ENCODE measurements at regions of chr14 and their contacts with region 1.

Region 1: DNA sequence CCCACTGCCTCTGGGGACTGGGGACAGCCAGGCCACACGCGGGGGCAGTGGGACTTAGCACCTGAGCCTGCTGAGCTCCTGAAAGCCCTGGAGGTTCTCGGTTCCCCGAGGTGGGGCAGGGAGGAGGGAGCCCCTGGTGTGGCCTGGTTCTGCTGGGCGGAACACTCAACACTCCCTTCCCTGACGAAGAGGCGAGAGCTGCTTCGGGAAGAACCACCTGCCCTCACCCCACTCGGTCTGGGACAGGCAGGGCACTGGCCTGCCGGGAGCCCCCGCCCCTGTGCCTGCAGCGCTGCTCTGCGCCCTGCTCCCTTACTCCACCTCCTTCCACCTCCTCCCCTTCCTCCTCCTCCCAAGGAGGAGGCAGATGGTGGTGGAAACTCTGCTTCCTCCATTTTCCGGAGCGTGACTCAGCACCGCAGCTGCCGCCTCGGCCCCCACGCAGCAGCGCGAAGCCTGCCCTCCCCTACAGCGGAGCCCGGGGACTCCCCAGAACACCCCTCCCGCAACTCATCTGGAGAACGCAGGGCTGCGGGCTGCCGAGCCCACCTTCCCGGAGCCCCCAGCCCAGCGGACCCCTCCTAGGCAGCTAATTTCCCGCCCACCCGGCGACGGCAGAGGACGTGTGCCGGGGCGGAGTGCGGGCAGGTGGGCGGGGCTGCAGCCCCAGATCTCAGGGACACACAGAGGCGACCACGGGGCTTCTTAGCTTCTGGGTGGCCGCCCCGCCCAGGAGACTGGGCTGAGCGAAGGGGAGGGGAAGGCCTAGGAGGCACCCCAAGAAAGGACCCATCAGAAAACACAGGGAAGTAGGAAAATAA is 11.7 kb upstream of the INF2 start:
- DNase-seq: peak; percentile 79
- ATAC-seq: peak; percentile 55
- H3K4me3 ChIP-seq: peak overlapping the region; percentile 16 to 64 (median 61)
- H3K4me3 Mint-ChIP-seq: peak overlapping the region; percentile 87
- H3K27ac ChIP-seq: peak overlapping the region; percentile 6 to 51
- H3K27ac Mint-ChIP-seq: peak overlapping the region; percentile 88
- H3K4me1 ChIP-seq: peaks cover 39 to 58% of the 10 kb centered on the region in 2 donors
- H3K4me1 Mint-ChIP-seq: peaks cover 51% of the 10 kb centered on the region
- H3K27me3 ChIP-seq: no peaks in the 10 kb centered on the region
- H3K27me3 Mint-ChIP-seq: no peaks in the 10 kb centered on the region
- CTCF ChIP-seq: no peak

Region 2: DNA sequence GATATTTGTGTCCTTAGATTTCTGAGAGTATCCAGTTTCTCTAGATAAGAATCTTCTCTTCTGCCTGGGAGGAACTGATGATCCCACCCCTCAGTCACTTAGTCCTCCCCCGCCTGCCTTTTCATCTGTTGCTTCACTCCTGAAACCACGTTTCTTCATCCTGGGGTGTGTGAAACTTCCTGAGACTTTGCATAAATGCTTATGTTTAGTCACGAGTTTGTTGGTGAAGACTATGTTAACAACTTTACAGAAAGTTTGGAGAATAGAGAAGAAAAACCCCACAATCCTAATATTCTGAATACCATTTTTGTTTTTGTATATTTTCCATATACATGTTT is 1259.3 kb before region 1 on chr14:
- CTCF ChIA-PET with region 1: no interaction called
- POLR2A ChIA-PET with region 1: no interaction called
- intact Hi-C with region 1: no loop called
- DNase-seq: no peak
- ATAC-seq: no peak
- H3K4me3 ChIP-seq: no peak overlapping the region
- H3K4me3 Mint-ChIP-seq: no peak overlapping the region
- H3K27ac ChIP-seq: no peak overlapping the region
- H3K27ac Mint-ChIP-seq: no peak overlapping the region
- H3K4me1 ChIP-seq: peaks cover 0 to 4% of the 10 kb centered on the region in 2 donors
- H3K4me1 Mint-ChIP-seq: peaks cover 24% of the 10 kb centered on the region
- H3K27me3 ChIP-seq: no peaks in the 10 kb centered on the region
- H3K27me3 Mint-ChIP-seq: no peaks in the 10 kb centered on the region
- CTCF ChIP-seq: no peak

Region 3: GRCh38 chr14:104650057-104650981 is 27.4 kb before region 1 on chr14:
- CTCF ChIA-PET with region 1: interaction called, 37 read pairs
- POLR2A ChIA-PET with region 1: interaction called, 5 read pairs
- intact Hi-C with region 1: loop called (anchors 1 kb)
- DNase-seq: peak; percentile 87
- ATAC-seq: peak; percentile 97
- H3K4me3 ChIP-seq: peak overlapping the region in 4 of 5 experiments; percentile 59 to 68 (median 62)
- H3K4me3 Mint-ChIP-seq: peak overlapping the region; percentile 83
- H3K27ac ChIP-seq: peak overlapping the region; percentile 59 to 70
- H3K27ac Mint-ChIP-seq: peak overlapping the region; percentile 74
- H3K4me1 ChIP-seq: peaks cover 35 to 47% of the 10 kb centered on the region in 2 donors
- H3K4me1 Mint-ChIP-seq: peaks cover 51% of the 10 kb centered on the region
- H3K27me3 ChIP-seq: no peaks in the 10 kb centered on the region
- H3K27me3 Mint-ChIP-seq: no peaks in the 10 kb centered on the region
- CTCF ChIP-seq: peak; percentile 99

Region 4: DNA sequence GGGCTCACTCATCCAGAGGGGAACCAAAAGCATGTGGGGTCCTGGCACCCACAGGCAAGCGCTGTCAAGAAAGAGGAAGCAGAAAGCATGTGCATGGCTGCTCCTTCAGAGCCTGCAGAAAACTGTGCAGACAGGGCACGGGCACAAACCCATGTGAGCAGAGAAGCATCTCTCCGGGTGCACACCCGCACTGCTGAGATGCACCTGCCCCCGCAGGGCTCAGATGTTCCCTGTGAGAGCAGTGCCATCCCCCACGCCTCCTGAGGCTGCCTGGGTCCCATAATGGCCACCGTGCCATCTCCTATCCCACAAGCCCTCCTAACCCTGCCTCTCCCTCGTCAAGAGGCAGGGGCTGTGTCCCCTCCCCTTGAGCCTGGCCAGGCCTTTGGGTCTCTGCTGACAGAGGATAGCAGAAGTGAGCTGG is 20.6 kb before region 1 on chr14:
- CTCF ChIA-PET with region 1: interaction called, 37 read pairs
- POLR2A ChIA-PET with region 1: interaction called, 23 read pairs
- intact Hi-C with region 1: loop called (anchors 1 kb)
- DNase-seq: peak; percentile 94
- ATAC-seq: peak; percentile 62
- H3K4me3 ChIP-seq: peak overlapping the region in 3 of 5 experiments; percentile 25 to 55 (median 32)
- H3K4me3 Mint-ChIP-seq: peak overlapping the region; percentile 84
- H3K27ac ChIP-seq: peak overlapping the region; percentile 98 to 100
- H3K27ac Mint-ChIP-seq: peak overlapping the region; percentile 99
- H3K4me1 ChIP-seq: peaks cover 65 to 74% of the 10 kb centered on the region in 2 donors
- H3K4me1 Mint-ChIP-seq: peaks cover 82% of the 10 kb centered on the region
- H3K27me3 ChIP-seq: no peaks in the 10 kb centered on the region
- H3K27me3 Mint-ChIP-seq: no peaks in the 10 kb centered on the region
- CTCF ChIP-seq: no peak

Region 5: DNA sequence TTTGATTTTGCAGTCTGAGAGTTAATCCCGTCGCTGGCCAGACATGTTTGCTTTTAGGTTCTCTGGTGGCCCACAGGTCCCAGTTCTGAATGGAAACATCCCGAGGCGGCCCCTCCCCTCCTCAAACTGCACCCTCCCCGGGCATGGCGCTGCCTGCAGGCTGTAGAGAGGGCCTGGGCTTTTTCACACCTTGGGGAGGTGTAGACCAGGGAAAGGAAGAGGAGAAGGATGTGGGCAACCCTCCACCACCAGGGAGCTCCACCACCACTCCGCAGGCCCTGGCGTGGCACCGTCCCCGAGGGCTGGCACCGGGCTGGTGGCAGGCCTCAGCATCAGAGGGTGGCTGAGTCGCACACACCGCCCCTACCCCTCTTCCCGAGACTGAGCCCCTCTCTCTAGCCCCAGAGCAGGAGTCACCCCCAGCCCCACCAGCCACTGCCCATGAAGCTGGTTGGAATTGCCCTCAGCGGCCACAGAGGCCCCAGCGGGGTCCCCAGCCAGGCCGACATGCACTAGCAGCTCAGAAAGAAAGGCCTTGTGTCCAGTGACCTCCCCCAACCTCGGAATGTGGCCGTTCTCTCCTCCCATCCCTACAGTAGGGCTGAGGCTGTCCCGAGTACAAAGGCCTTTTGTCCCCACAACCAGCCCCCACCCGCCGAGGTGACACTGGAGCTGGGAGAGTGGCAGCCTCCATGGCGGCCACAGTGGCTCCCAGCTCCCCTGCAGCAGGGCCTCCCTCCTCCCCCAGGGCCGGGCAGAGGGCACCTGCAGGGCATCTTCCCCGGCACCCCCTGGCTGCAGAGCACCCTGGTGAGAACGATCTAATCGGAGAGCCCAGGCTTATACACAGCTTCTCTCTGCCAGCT is 11.8 kb before region 1 on chr14:
- CTCF ChIA-PET with region 1: interaction called, 64 read pairs
- POLR2A ChIA-PET with region 1: interaction called, 17 read pairs
- intact Hi-C with region 1: loop called (anchors 1 kb)
- DNase-seq: peak; percentile 72
- ATAC-seq: peak; percentile 50
- H3K4me3 ChIP-seq: peak overlapping the region in 2 of 5 experiments; percentile 5 to 15
- H3K4me3 Mint-ChIP-seq: peak overlapping the region; percentile 73
- H3K27ac ChIP-seq: peak overlapping the region; percentile 52 to 65
- H3K27ac Mint-ChIP-seq: peak overlapping the region; percentile 89
- H3K4me1 ChIP-seq: peaks cover 40 to 49% of the 10 kb centered on the region in 2 donors
- H3K4me1 Mint-ChIP-seq: peaks cover 45% of the 10 kb centered on the region
- H3K27me3 ChIP-seq: no peaks in the 10 kb centered on the region
- H3K27me3 Mint-ChIP-seq: no peaks in the 10 kb centered on the region
- CTCF ChIP-seq: peak; percentile 57

Region 6: GRCh38 chr14:104708606-104709268 is 31.0 kb after region 1 on chr14:
- CTCF ChIA-PET with region 1: interaction called, 6 read pairs
- POLR2A ChIA-PET with region 1: no interaction called
- intact Hi-C with region 1: loop called (anchors 1 kb)
- DNase-seq: peak; percentile 83
- ATAC-seq: peak; percentile 97
- H3K4me3 ChIP-seq: no peak overlapping the region
- H3K4me3 Mint-ChIP-seq: no peak overlapping the region
- H3K27ac ChIP-seq: no peak overlapping the region
- H3K27ac Mint-ChIP-seq: peak overlapping the region; percentile 59
- H3K4me1 ChIP-seq: peaks cover 7 to 12% of the 10 kb centered on the region in 2 donors
- H3K4me1 Mint-ChIP-seq: peaks cover 4% of the 10 kb centered on the region
- H3K27me3 ChIP-seq: no peaks in the 10 kb centered on the region
- H3K27me3 Mint-ChIP-seq: no peaks in the 10 kb centered on the region
- CTCF ChIP-seq: peak; percentile 97

Measured in B cell (primary cell).